Activated CD4-positive, alpha-beta memory T cell treated with anti-CD3 and anti-CD28 coated beads, Interleukin-2, amount 10 ng/mL, durations not matched to agents 7 days and 5 days (primary cell): ENCODE measurements at regions of chr2 and their contacts with region 1.

Region 1: DNA sequence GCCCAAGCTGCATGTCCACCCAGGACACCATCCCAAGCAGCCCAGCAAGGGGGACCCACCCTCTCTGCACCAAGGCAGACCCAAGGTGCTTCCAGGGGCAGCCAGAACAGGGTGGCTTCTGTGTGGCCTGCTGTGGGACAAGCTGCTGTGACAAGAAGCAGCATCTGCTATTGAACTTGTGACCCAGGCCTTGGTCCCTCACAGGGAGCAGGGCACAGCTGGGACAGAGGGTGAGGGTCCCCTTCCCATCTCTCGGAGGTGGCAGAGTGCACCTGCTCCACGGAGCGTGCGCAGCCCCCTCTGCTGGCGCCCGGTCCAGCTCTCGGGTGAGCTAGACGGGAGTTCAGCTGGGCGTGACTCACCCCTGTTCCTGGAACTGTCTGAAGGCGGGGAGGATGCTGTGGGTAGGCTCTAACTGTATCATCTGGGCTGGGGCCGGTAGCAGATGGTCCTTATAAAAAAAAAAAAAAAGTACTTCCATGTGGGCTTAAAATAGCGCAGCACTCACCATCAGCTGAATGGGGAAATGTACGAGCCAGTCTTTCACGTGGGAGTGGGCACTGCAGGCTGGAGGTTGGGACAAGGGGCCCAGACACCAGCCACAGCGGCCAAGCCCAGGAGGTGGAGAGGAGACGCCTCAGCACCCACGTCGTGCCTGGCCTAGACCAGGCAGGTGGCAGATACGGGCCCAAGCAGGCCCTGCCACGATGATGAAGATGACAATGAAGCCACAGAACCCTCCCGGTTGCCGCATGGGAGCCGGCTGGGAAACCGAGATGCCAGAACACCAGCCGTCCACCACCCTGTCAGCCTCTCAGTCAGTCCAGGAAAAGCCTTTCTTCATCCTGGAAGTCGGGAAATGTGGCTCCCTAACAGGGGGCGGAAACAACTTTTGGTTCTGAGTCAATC is 136.8 kb upstream of the ID2 start:
- DNase-seq: peak; percentile 93
- H3K4me3 Mint-ChIP-seq: peak overlapping the region; percentile 39
- H3K27ac Mint-ChIP-seq: peak overlapping the region; percentile 100
- H3K4me1 Mint-ChIP-seq: peaks cover 81% of the 10 kb centered on the region
- H3K27me3 Mint-ChIP-seq: no peaks in the 10 kb centered on the region

Region 2: GRCh38 chr2:8219631-8220355 is 325.2 kb before region 1 on chr2:
- CTCF ChIA-PET with region 1: no interaction called
- POLR2A ChIA-PET with region 1: no interaction called
- DNase-seq: no peak
- H3K4me3 Mint-ChIP-seq: no peak overlapping the region
- H3K27ac Mint-ChIP-seq: no peak overlapping the region
- H3K4me1 Mint-ChIP-seq: peaks cover 5% of the 10 kb centered on the region
- H3K27me3 Mint-ChIP-seq: no peaks in the 10 kb centered on the region

Region 3: GRCh38 chr2:8281950-8282857 is 262.8 kb before region 1 on chr2:
- CTCF ChIA-PET with region 1: interaction called, 4 read pairs
- POLR2A ChIA-PET with region 1: interaction called, 15 read pairs
- DNase-seq: peak; percentile 45
- H3K4me3 Mint-ChIP-seq: peak overlapping the region; percentile 79
- H3K27ac Mint-ChIP-seq: peak overlapping the region; percentile 88
- H3K4me1 Mint-ChIP-seq: peaks cover 55% of the 10 kb centered on the region
- H3K27me3 Mint-ChIP-seq: no peaks in the 10 kb centered on the region

Region 4: DNA sequence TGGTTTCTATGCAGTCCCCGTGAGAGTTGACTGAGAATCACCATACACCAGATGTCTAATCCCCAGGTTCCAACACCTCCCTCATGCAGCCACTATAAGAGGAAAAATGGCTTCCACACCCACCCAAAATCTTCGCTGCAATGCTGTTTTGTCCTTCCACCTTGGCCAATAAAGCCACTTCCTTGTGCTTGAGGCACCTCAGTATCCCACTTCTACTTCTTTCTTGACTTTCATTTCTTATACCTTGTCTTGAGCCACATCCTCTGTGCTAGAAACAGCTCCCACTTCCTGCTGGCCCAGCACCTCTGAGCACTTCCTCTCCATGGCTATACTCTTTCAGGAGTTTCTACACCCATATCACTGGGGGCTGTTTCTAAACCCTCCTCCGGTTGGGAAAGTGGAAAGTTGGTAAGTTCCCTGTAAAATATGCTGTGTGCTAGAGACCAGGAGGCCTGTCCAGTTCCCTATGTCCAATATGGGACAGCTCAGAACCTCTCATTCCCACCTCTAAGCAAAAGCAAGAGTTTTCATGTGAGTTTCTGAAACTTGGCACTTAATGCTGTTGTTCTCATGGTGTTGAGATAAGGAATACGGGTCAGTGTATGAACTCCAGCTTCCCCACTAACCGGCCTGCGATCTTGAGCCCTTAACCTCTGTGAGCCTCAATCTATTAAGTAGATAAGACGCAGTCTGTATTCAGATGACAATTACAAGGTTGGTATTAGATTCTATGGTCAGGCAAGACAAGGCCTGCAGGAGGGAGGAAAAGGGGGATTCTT is 72.3 kb before region 1 on chr2:
- CTCF ChIA-PET with region 1: interaction called, 21 read pairs
- POLR2A ChIA-PET with region 1: interaction called, 52 read pairs
- DNase-seq: peak; percentile 57
- H3K4me3 Mint-ChIP-seq: peak overlapping the region; percentile 11
- H3K27ac Mint-ChIP-seq: peak overlapping the region; percentile 92
- H3K4me1 Mint-ChIP-seq: peaks cover 84% of the 10 kb centered on the region
- H3K27me3 Mint-ChIP-seq: no peaks in the 10 kb centered on the region

Region 5: DNA sequence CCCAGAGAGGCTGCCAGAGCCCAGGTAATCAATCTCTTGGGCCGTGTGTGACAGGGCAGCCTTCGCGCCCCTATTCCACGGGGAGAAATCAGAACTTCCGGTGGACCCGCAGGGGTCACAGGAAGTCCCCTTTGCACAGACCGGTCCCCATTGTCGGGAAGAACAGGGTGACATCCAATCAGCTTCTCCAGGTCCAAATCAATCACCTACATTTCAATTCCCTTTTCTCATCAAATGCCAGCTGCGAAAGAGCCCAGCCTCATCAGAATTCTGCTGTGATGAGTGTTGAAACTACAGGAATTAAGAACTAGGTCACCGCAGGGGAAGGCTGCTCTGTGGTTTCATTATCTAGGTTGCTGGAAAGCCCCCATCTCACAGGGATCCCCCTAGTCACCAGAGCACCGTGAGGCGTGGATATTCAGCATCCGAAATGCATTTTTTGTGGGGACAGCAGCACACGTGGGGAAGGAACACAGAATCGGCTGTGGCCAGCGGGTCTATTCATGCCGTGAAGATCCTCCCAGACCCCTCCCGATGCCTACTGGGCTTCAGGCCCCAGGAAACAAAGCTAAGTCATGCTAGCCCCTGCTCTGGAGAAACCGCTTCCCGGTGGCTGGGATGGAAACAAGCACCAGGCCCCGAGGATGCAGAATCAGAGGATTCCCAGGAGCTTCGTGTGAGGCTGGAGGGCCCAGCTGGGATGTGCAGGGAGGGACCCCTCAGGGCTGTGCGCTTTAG is 56.9 kb before region 1 on chr2:
- CTCF ChIA-PET with region 1: interaction called, 9 read pairs
- POLR2A ChIA-PET with region 1: interaction called, 54 read pairs
- DNase-seq: peak; percentile 70
- H3K4me3 Mint-ChIP-seq: peak overlapping the region; percentile 81
- H3K27ac Mint-ChIP-seq: peak overlapping the region; percentile 84
- H3K4me1 Mint-ChIP-seq: peaks cover 78% of the 10 kb centered on the region
- H3K27me3 Mint-ChIP-seq: no peaks in the 10 kb centered on the region

Region 6: GRCh38 chr2:8525582-8526402 is 19.2 kb before region 1 on chr2:
- CTCF ChIA-PET with region 1: interaction called, 9 read pairs
- POLR2A ChIA-PET with region 1: interaction called, 46 read pairs
- DNase-seq: no peak
- H3K4me3 Mint-ChIP-seq: no peak overlapping the region
- H3K27ac Mint-ChIP-seq: no peak overlapping the region
- H3K4me1 Mint-ChIP-seq: peaks cover 58% of the 10 kb centered on the region
- H3K27me3 Mint-ChIP-seq: peaks cover 3% of the 10 kb centered on the region

Region 7: DNA sequence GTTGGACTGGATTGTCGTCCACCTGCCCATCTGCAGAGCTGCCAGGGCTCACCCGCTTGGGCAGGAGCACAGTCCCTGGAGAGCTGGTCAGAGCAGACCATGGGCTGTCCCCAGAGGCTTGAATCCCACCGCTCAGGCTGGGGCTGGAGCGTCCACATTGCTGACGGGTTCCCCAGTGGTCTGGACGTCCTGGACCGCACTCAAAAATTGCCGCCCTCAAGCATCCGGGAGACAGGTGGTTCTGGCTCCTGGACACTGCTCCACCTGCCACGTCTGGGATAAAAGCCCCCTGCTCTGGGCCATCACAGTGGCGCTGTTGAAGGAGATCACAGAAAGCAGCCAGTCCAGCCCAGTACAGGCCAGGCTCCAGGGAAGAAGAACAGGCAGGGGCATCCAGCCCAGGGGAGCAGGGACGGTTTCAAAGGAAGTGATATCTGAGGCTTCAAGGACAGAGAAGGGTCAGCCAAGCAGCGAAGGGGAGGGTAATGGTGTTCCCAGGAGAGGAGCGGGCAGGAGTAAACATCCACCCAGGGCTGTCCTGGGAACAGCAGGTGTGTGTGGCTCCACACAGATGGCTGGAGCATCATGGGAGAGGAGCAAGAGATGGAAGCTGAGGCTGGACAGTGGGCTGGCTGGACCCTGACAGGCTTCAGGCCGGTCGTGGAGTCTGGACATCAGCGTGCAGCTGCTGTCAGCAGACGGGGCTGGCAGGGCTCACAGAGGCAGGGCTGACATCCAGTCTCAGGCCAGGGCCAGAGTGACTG is 114.9 kb after region 1 on chr2:
- CTCF ChIA-PET with region 1: no interaction called
- POLR2A ChIA-PET with region 1: no interaction called
- DNase-seq: no peak
- H3K4me3 Mint-ChIP-seq: no peak overlapping the region
- H3K27ac Mint-ChIP-seq: no peak overlapping the region
- H3K4me1 Mint-ChIP-seq: peaks cover 16% of the 10 kb centered on the region
- H3K27me3 Mint-ChIP-seq: peaks cover 3% of the 10 kb centered on the region

Region 8: GRCh38 chr2:9234680-9235387 is 689.8 kb after region 1 on chr2:
- CTCF ChIA-PET with region 1: no interaction called
- POLR2A ChIA-PET with region 1: no interaction called
- DNase-seq: no peak
- H3K4me3 Mint-ChIP-seq: no peak overlapping the region
- H3K27ac Mint-ChIP-seq: no peak overlapping the region
- H3K4me1 Mint-ChIP-seq: peaks cover 10% of the 10 kb centered on the region
- H3K27me3 Mint-ChIP-seq: peaks cover 28% of the 10 kb centered on the region